Endothelial cell of umbilical vein (primary cell): ENCODE measurements at regions of chr10 and their contacts with region 1.

Region 1: GRCh38 chr10:30687698-30688219 is 58.2 kb upstream of the LYZL2 start:
- DNase-seq: peak; percentile 82
- H3K4me3 ChIP-seq: no peak overlapping the region
- H3K27ac ChIP-seq: no peak overlapping the region
- H3K4me1 ChIP-seq: peaks cover 2% of the 10 kb centered on the region
- H3K27me3 ChIP-seq: peaks cover 6 to 10% of the 10 kb centered on the region in 2 experiments
- CTCF ChIP-seq: peak; percentile 92
- POLR2A ChIP-seq: no peak

Region 2: GRCh38 chr10:30639946-30640786 is 47.6 kb before region 1 on chr10:
- CTCF ChIA-PET with region 1: interaction called, 11 read pairs
- POLR2A ChIA-PET with region 1: no interaction called
- dilution Hi-C with region 1: no loop called
- intact Hi-C with region 1: loop called (anchors 2 kb)
- DNase-seq: peak; percentile 86
- H3K4me3 ChIP-seq: no peak overlapping the region
- H3K27ac ChIP-seq: peak overlapping the region; percentile 44
- H3K4me1 ChIP-seq: peaks cover 61% of the 10 kb centered on the region
- H3K27me3 ChIP-seq: peaks cover 0 to 1% of the 10 kb centered on the region in 2 experiments
- CTCF ChIP-seq: peak; percentile 64 to 70
- POLR2A ChIP-seq: no peak

Region 3: GRCh38 chr10:30701451-30702173 is 13.9 kb after region 1 on chr10:
- CTCF ChIA-PET with region 1: interaction called, 14 read pairs
- POLR2A ChIA-PET with region 1: no interaction called
- dilution Hi-C with region 1: no loop called
- intact Hi-C with region 1: no loop called
- DNase-seq: no peak
- H3K4me3 ChIP-seq: no peak overlapping the region
- H3K27ac ChIP-seq: no peak overlapping the region
- H3K4me1 ChIP-seq: no peaks in the 10 kb centered on the region
- H3K27me3 ChIP-seq: peaks cover 4 to 18% of the 10 kb centered on the region in 2 experiments
- CTCF ChIP-seq: no peak
- POLR2A ChIP-seq: no peak

Region 4: DNA sequence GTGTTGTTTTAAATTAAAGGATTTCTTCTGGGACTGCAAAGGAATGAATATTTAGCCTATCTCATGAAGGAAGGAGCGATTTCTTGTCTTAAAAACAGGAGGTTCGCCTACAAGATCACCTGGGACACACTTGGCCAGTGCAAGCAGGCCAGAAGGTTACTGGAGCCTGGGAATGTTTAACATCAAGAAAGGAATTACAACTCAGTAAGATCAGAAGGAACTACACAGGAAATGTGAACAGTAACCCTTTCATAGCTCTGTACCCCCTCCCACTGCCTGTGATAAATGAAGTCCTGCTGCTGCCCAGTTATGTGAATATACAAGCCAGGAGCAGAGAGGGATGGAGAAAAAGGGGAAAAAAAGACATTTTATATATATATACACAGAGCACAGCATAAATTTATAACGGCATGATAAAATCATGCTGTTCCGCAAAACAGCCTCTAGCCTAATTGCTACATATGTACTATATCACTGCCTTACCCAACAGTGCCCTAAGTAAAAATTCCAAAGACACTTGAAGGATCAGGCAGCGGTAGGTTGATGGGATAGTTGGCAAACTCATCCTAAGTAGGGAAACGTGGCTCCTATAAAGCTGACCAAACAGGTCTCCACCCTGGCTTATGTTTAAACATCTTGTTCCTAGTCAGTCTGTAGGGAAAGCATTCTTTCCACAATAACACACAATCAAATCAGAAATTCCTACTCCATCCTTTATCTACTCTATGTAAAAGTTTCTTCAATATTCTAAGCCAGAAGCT is 280.1 kb after region 1 on chr10:
- CTCF ChIA-PET with region 1: no interaction called
- POLR2A ChIA-PET with region 1: no interaction called
- dilution Hi-C with region 1: no loop called
- intact Hi-C with region 1: no loop called
- DNase-seq: peak; percentile 77
- H3K4me3 ChIP-seq: no peak overlapping the region
- H3K27ac ChIP-seq: peak overlapping the region; percentile 22
- H3K4me1 ChIP-seq: peaks cover 45% of the 10 kb centered on the region
- H3K27me3 ChIP-seq: no peaks in the 10 kb centered on the region
- CTCF ChIP-seq: no peak
- POLR2A ChIP-seq: no peak

Region 5: GRCh38 chr10:31490858-31491504 is 803.2 kb after region 1 on chr10:
- CTCF ChIA-PET with region 1: interaction called, 8 read pairs
- POLR2A ChIA-PET with region 1: no interaction called
- dilution Hi-C with region 1: no loop called
- intact Hi-C with region 1: loop called (anchors 5 kb)
- DNase-seq: peak; percentile 63
- H3K4me3 ChIP-seq: no peak overlapping the region
- H3K27ac ChIP-seq: peak overlapping the region; percentile 7
- H3K4me1 ChIP-seq: peaks cover 13% of the 10 kb centered on the region
- H3K27me3 ChIP-seq: no peaks in the 10 kb centered on the region
- CTCF ChIP-seq: peak; percentile 50 to 53
- POLR2A ChIP-seq: no peak

Region 6: DNA sequence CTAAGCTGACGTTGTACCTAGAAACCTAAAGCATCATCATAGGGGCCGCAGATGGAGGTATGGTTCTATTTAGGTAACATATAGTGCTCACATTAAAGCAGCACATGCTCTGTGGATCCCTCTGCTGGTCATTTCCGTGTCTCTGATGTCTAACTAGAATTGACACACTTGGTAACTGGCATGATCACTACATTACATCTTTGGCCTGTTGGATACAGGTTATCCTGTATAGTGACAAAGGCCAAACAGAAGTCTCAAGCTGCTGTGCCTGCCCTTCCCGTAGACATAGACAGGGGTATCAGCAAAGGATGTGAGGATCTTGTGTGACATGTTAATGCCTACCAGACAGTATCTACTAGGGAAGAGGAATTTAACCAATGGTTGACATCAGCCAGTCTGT is 1317.3 kb after region 1 on chr10:
- CTCF ChIA-PET with region 1: interaction called, 15 read pairs
- POLR2A ChIA-PET with region 1: no interaction called
- dilution Hi-C with region 1: no loop called
- intact Hi-C with region 1: no loop called
- DNase-seq: peak; percentile 57
- H3K4me3 ChIP-seq: no peak overlapping the region
- H3K27ac ChIP-seq: no peak overlapping the region
- H3K4me1 ChIP-seq: no peaks in the 10 kb centered on the region
- H3K27me3 ChIP-seq: no peaks in the 10 kb centered on the region
- CTCF ChIP-seq: peak; percentile 41 to 55
- POLR2A ChIP-seq: no peak